GM12878 (cell line): ENCODE measurements at regions of chr2 and their contacts with region 1.

Region 1: DNA sequence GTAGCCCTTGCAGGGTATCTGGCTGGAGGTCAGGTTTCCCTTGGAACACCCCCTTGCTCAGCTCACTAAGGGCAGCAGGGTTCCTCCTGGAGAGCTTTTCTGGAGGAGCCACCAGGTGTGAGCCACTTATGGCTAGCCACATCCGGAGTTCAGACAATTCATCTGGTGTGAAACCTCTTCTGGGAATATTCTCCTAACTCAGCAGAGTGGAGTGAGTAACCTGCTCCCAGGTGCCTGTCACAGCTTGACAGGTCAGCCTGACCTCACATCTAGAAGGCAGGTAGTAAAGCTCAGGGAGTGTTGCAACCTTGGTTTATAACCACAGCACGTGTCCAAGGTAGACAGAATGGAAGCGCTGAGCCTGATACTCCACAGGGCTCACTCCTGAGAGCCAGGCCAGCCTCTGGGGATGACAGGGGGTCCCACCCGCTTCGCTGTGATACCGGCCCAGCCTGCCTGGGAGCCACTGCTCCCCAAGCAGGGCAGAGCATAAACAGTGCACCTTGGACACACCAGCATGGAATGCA is 62.6 kb upstream of the TGFA start:
- DNase-seq: no peak
- ATAC-seq: no peak
- H3K4me3 ChIP-seq: no peak overlapping the region
- H3K27ac ChIP-seq: no peak overlapping the region
- H3K4me1 ChIP-seq: no peaks in the 10 kb centered on the region
- H3K27me3 ChIP-seq: no peaks in the 10 kb centered on the region; a peak in 1 of 4 replicates
- CTCF ChIP-seq: no peak
- EP300 ChIP-seq: no peak
- POLR2A ChIP-seq: no peak
- RAD21 ChIP-seq: no peak

Region 2: DNA sequence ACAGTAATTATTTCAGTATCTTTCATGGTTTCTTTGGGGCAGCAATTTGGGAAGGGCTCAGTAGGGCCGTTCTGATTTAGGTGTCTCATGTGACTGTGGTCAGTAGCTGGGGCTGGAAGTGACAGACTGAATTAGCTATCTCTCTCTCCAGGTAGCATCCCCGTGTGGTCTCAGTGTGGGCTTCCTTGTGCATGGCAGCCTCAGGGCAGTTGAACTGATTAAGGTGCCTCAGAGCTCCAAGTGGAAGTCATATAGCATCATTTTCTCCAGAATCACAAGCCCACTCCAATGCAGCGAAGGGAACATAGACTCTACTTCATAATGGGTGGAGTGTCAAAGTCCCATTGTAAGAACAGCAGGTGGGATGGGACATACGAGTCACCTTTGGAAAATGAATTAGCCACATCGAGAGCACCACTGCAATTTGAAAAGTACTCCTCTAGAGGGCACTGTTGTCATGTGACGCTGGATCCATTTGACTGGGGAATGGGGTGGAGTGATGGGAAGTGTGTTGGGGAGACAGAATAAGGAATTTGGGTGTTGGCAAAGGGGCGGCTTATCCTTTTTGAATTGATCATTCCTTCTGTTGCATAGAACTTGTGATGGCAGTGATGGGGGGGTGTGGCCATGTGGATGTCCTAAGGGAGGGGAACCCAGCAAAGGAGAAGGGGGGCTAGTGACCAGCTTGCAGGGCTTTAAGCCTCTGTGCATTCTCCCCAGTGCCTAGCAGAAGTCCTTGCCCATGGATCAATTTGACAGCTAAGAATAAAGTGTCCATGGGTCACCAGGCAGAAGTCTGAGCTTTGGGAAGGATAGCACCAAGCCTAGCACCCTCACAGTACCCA is 275.1 kb before region 1 on chr2:
- CTCF ChIA-PET with region 1: interaction called, 65 read pairs
- POLR2A ChIA-PET with region 1: no interaction called
- RAD21 ChIA-PET with region 1: interaction called, 14 read pairs
- SMC1A ChIA-PET with region 1: interaction called, 6 read pairs
- in situ Hi-C with region 1: loop called (anchors 5 kb)
- intact Hi-C with region 1: loop called (anchors 1 kb)
- DNase-seq: no peak
- ATAC-seq: peak; percentile 83
- H3K4me3 ChIP-seq: no peak overlapping the region
- H3K27ac ChIP-seq: no peak overlapping the region
- H3K4me1 ChIP-seq: no peaks in the 10 kb centered on the region
- H3K27me3 ChIP-seq: no peaks in the 10 kb centered on the region
- CTCF ChIP-seq: peak; percentile 71 to 79 (median 77)
- EP300 ChIP-seq: no peak
- POLR2A ChIP-seq: no peak
- RAD21 ChIP-seq: peak; percentile 94

Region 3: DNA sequence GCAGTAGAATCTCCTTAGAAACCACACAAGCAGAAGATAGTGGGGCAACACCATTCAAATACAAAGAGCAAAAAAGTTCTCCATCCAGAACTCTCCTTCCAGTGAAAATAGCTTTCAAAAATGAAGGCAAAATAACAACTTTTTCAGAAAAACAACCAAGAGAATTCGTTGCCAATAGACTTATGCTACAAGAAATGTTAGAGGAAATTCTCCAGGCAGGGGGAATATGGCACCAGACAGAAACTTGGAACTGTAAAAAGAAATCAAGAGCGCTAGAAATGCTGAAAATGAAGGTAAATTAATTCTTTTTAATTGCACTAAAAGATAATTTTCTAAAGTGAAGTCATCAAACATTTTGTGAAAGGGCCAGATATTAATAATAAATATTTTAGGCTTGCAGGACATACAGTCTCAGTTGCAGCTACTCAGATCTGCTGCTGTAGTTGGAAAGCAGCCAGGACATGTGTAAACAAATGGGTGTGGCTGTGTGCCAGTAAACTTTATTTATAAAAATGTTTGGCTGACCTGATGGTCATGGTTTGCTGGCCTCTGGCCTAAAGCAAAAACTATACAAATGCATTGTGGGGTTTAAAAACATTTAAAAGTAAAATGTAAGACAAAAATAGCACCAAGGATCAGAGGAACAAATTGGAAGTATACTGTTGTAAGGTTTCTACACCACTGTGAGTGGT is 11.1 kb after region 1 on chr2:
- CTCF ChIA-PET with region 1: interaction called, 15 read pairs
- POLR2A ChIA-PET with region 1: no interaction called
- RAD21 ChIA-PET with region 1: no interaction called
- SMC1A ChIA-PET with region 1: interaction called, 3 read pairs
- in situ Hi-C with region 1: no loop called
- intact Hi-C with region 1: no loop called
- DNase-seq: no peak
- ATAC-seq: no peak
- H3K4me3 ChIP-seq: no peak overlapping the region
- H3K27ac ChIP-seq: no peak overlapping the region
- H3K4me1 ChIP-seq: no peaks in the 10 kb centered on the region
- H3K27me3 ChIP-seq: 0 out of 4 replicates have a peak, but pooled peaks cover 0 to 2% of the 10 kb centered on the region in 2 experiments
- CTCF ChIP-seq: no peak
- EP300 ChIP-seq: no peak
- POLR2A ChIP-seq: no peak
- RAD21 ChIP-seq: no peak

Region 4: DNA sequence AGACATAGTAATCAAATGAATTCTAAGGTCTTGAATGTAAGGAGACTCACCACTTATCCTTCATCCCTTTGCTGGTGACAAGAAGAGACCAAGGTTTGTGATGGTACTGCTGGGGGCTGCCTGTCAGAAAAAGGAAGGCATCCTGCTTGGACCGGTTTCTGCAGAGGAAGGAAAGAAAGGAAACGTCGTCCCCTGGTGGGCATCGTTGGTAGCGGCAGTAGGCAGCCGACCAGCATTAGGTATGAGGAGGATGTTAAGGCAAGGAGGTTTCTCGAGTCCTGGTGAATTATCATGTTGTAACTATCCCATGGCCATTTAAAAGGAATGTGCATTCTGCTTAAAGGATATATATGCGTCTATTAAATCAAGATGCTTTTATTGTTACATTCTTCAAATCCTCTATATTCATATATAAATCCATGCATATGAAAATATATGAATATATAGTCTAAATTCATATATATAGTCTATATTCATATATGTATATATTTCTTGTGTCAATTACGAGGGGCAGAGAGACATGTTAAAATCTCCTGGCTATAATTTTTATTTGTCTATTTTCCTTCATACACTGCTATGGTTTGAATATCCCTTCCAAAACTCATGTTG is 31.7 kb after region 1 on chr2:
- CTCF ChIA-PET with region 1: interaction called, 12 read pairs
- POLR2A ChIA-PET with region 1: no interaction called
- RAD21 ChIA-PET with region 1: no interaction called
- SMC1A ChIA-PET with region 1: interaction called, 5 read pairs
- in situ Hi-C with region 1: no loop called
- intact Hi-C with region 1: no loop called
- DNase-seq: no peak
- ATAC-seq: peak; percentile 88
- H3K4me3 ChIP-seq: no peak overlapping the region
- H3K27ac ChIP-seq: no peak overlapping the region
- H3K4me1 ChIP-seq: no peaks in the 10 kb centered on the region
- H3K27me3 ChIP-seq: no peaks in the 10 kb centered on the region; a peak in 1 of 4 replicates
- CTCF ChIP-seq: peak; percentile 94 to 100 (median 98); a peak in 5 of 6 replicates
- EP300 ChIP-seq: no peak
- POLR2A ChIP-seq: no peak
- RAD21 ChIP-seq: peak; percentile 82

Region 5: DNA sequence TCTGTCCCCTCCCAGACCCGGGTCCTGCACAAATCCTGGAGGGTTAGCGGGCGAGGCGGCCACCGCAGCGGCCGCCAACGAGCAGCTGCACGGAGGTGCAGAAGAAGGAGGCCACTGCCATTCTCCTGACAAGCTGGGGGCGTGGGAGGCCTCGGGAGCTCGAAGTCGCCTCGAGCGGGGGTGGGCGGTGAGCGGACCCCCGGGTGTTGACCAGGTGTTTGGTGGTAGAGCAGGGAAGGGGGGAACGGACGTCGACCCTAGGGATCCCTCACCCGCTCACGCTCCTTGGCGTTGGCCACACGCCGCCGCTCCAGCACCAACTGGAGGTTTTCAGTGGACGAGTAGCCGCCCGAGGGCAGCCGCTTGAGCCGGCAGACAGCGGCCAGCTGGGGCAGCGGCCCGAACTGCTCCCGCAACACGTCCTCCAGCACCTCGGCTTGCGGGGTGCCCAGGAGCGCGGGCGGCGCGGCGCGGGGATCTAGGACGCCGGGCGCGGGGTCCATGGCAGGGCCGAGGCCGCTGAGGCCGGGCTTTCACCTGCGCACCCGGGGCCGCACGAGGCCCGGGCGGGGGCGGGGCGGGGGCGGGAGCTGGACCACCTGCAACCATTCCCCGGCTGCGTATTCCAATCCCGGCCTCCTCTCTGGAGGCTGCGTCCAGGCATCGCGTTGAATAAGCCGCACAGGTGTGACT is 174.1 kb after region 1 on chr2 and contains the start of gene FIGLA:
- CTCF ChIA-PET with region 1: no interaction called
- POLR2A ChIA-PET with region 1: no interaction called
- RAD21 ChIA-PET with region 1: no interaction called
- SMC1A ChIA-PET with region 1: no interaction called
- in situ Hi-C with region 1: no loop called
- intact Hi-C with region 1: no loop called
- DNase-seq: no peak
- ATAC-seq: no peak
- H3K4me3 ChIP-seq: no peak within 1 kb of the TSS
- H3K27ac ChIP-seq: no peak within 1 kb of the TSS
- H3K4me1 ChIP-seq: no peaks in the 10 kb centered on the region
- H3K27me3 ChIP-seq: peaks cover 5 to 12% of the 10 kb centered on the region in 2 experiments
- CTCF ChIP-seq: no peak
- EP300 ChIP-seq: no peak
- POLR2A ChIP-seq: no peak
- RAD21 ChIP-seq: no peak
- polyA plus RNA-seq, gene FIGLA: not detected